ENCODE measurements at regions of chr10 and their contacts with region 1.

Region 1: GRCh38 chr10:70815504-70816219 is at the start of gene SGPL1:
- DNase-seq: peak; percentile 81 to 93
- ATAC-seq: peak; percentile 82 to 85
- H3K4me3 ChIP-seq: peak within 1 kb of the TSS; percentile 64
- H3K27ac ChIP-seq: peak within 1 kb of the TSS; percentile 95 to 97
- H3K4me1 ChIP-seq: peaks cover 11% of the 10 kb centered on the region
- CTCF ChIP-seq: peak; percentile 94
- EP300 ChIP-seq: no peak
- POLR2A ChIP-seq: peak; percentile 66
- RAD21 ChIP-seq: peak; percentile 75 to 91
- polyA plus RNA-seq, gene SGPL1: 49.8 and 58.5 TPM in 2 replicates

Region 2: DNA sequence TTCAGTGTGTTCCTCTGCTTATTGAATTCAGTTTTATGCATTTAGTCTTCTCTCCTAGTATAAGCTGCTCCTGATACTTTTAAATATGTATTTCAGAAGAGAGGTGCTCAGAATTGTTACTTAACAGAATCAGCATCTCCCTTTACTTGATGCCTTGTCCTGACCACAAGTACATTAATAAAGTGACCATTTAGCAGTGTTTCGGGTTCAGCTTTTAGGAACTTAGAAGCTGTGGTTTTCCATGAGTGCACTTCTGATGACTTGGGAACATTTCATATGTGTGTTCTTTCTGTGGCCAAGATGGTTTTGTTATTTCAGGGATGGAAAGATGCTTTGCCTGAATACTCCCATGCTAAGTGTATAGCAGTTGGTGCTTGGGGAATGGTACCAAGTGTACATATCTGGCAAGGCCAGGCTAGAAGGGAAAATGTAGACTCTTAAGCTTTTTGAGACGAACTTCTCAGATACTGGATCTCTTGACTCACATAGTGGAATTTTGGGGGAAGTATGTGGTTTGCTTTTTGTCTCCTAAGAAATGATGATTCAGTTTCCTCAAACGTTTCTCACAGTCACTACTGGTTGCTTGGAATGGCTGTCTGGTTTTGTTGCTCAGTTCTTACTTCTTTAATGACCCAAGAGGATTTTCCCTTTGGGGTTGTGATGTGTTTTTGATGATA is 17.3 kb after region 1 on chr10:
- CTCF ChIA-PET with region 1: interaction called, 13 read pairs
- POLR2A ChIA-PET with region 1: interaction called, 10 read pairs
- DNase-seq: no peak
- ATAC-seq: peak in 1 of 2 experiments; percentile 62; a peak in 4 of 6 replicates
- H3K4me3 ChIP-seq: no peak overlapping the region
- H3K27ac ChIP-seq: peak overlapping the region in 1 of 2 experiments; percentile 21; a peak in 1 of 6 replicates
- H3K4me1 ChIP-seq: peaks cover 15% of the 10 kb centered on the region
- CTCF ChIP-seq: no peak
- EP300 ChIP-seq: no peak
- POLR2A ChIP-seq: no peak
- RAD21 ChIP-seq: no peak

Region 3: DNA sequence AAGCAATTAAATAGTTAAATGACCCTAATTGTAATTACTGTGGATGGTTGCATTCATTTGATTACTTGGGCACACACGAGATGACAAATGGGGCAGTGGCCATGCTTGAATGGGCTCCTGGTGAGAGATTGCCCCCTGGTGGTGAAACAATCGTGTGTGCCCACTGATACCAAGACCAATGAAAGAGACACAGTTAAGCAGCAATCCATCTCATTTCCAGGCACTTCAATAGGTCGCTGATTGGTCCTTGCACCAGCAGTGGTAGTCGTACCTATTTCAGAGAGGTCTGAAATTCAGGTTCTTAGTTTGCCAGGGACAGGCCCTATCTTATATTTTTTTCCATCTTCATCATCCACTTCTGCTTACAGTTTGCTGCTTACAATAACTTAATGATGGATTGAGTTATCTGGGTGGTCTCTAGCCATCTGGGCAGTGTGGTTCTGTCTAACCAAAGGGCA is 64.4 kb after region 1 on chr10:
- CTCF ChIA-PET with region 1: interaction called, 48 read pairs
- POLR2A ChIA-PET with region 1: no interaction called
- DNase-seq: peak; percentile 72 to 80
- ATAC-seq: peak; percentile 86 to 95
- H3K4me3 ChIP-seq: no peak overlapping the region
- H3K27ac ChIP-seq: no peak overlapping the region
- H3K4me1 ChIP-seq: no peaks in the 10 kb centered on the region
- CTCF ChIP-seq: peak; percentile 92
- EP300 ChIP-seq: no peak
- POLR2A ChIP-seq: no peak
- RAD21 ChIP-seq: peak; percentile 83 to 85

Region 4: DNA sequence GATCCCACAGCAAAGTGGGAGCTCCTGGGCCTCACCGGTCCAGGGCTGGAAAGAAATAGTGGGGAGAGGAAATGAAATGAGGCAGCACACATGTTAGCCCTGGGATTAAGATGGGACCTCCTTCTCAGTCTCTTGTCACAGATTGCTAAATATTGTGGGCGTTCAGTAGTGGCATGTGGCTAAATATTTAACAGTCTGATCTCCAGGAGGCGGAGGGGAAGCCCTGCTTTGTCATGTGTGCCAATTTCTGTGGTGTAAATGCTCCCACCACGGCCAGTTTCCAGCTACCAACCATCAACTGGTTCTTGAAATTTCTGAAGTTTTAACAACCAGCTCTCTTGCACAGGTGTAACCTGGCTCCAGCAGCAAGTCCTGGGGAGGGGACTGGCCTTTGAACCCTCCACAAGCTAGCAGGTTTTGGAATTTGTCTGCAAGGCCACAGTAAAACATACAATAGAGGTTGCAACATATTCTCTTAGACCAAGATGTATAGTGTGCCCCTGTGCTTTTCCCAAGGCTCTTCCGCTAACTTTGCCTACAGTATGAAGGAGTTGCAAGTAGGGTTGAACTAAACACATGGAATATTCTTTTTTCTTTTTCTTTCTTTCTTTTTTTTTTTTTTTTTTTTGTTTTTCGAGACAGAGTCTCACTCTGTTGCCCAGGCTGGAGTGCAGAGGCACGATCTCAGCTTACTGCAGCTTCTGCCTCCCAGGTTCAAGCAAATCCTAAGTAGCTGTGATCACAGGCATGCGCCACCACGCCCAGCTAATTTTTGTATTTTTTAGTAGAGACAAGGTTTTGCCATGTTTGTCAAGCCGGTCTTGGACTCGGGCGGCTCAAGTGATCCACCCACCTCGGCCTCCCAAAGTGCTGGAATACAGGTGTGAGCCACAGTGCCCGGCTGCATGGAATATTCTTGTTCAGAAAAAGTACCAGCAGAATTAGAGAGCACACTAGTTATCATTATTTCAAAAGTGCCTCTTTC is 175.8 kb after region 1 on chr10:
- CTCF ChIA-PET with region 1: no interaction called
- POLR2A ChIA-PET with region 1: no interaction called
- DNase-seq: no peak
- ATAC-seq: no peak
- H3K4me3 ChIP-seq: no peak overlapping the region
- H3K27ac ChIP-seq: no peak overlapping the region
- H3K4me1 ChIP-seq: no peaks in the 10 kb centered on the region
- CTCF ChIP-seq: no peak
- EP300 ChIP-seq: no peak
- POLR2A ChIP-seq: no peak
- RAD21 ChIP-seq: no peak